ENCODE measurements at regions of chr15 and their contacts with region 1.

Region 1: GRCh38 chr15:77633134-77633912 is 611 bp upstream of the LINGO1 start:
- H3K4me3 ChIP-seq: peak overlapping the region; percentile 31
- H3K27ac ChIP-seq: peak overlapping the region; percentile 7; the same call in 1 of the 2 replicates
- H3K4me1 ChIP-seq: no peaks in the 10 kb centered on the region; the same call in 1 of the 2 replicates
- CTCF ChIP-seq: peak; percentile 100

Region 2: DNA sequence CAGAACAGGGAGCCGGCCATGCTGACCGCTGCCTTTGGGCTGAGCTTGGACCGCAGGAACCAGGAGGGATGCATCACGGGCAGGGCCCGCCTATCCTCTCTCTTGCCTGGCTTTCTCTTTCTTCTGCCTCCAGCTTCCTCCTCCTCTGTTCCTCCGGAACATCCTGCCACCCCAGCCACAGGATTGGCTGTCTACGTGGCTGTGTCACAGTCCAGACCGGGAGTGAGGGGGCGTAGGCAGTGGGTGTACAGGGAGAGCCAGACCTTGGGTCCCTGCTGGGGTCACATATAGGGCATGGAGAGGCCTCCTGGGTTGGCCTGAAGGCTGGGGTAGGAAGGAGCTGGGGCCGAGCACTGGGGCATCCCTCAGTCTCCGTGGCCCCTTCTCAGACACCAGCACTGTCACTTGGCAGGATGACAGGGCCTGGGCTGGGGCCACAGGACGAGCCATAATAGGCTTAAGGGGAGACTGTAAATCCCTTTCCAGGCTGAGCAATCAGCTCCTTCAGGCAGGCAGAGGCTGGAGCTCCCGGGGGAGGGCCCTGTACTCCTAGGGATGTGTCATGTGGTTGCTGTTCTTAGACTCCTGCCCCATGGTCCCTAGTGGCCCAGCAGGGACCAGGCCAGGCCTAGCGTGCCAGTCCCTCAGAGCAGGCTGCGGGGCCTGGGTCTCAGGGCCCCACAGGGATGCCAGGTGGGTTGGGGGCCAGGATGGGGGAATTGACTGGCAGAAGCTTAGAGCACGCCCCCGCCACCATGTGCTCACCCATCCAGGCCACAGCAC is 26.0 kb before region 1 on chr15:
- CTCF ChIA-PET with region 1: interaction called, 18 read pairs
- POLR2A ChIA-PET with region 1: interaction called, 4 read pairs
- H3K4me3 ChIP-seq: no peak overlapping the region
- H3K27ac ChIP-seq: no peak overlapping the region; the same call in 1 of the 2 replicates
- H3K4me1 ChIP-seq: peaks cover 6% of the 10 kb centered on the region; the same call in 1 of the 2 replicates
- CTCF ChIP-seq: 0 out of 2 replicates have a peak, but pooled peaks have one; percentile 8

Region 3: DNA sequence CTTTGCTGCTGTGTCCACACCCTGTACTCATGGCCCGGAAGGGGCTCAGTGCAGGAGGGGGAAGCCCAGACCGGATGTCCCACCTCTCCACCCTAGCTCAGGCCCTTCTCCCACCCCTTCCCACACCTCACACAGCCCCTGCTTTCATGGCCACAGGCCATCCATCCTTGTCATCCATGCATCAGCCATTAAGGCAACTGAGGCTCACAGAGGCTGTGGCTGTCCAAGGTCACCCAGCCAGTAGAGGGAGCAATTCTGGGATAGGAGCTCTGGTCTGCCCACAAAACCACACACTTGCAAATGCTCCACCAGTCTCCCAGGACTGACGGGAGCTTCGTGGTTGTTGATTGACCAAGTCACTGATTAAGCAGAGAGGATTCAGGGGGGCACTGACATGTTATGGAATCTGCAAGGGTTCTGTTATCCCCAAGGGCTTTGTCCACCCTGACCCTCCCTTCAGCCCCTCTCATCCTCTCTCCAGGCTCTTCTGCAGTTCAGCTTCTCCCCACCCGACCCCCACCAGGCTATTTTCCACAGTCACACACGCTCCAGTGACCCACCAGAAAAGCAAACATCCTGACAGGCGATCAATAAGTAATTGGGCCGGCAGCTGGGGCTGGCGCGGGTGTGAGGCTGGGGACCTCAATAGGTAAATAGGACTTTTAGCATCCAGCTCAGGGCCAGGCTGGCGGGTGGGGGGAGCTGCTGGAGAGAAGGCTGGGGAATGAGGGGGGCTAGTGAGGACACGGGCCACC is 15.7 kb before region 1 on chr15:
- CTCF ChIA-PET with region 1: interaction called, 77 read pairs
- POLR2A ChIA-PET with region 1: interaction called, 5 read pairs
- H3K4me3 ChIP-seq: no peak overlapping the region
- H3K27ac ChIP-seq: no peak overlapping the region
- H3K4me1 ChIP-seq: no peaks in the 10 kb centered on the region
- CTCF ChIP-seq: 0 out of 2 replicates have a peak, but pooled peaks have one; percentile 43

Region 4: GRCh38 chr15:77650265-77650664 is 16.9 kb after region 1 on chr15:
- CTCF ChIA-PET with region 1: interaction called, 57 read pairs
- POLR2A ChIA-PET with region 1: no interaction called
- H3K4me3 ChIP-seq: no peak overlapping the region
- H3K27ac ChIP-seq: no peak overlapping the region
- H3K4me1 ChIP-seq: no peaks in the 10 kb centered on the region
- CTCF ChIP-seq: 0 out of 2 replicates have a peak, but pooled peaks have one; percentile 41

Region 5: GRCh38 chr15:77659350-77660321 is 26.3 kb after region 1 on chr15:
- CTCF ChIA-PET with region 1: interaction called, 52 read pairs
- POLR2A ChIA-PET with region 1: interaction called, 4 read pairs
- H3K4me3 ChIP-seq: no peak overlapping the region
- H3K27ac ChIP-seq: no peak overlapping the region
- H3K4me1 ChIP-seq: no peaks in the 10 kb centered on the region
- CTCF ChIP-seq: no peak

Region 6: GRCh38 chr15:77784395-77785292 is 151.3 kb after region 1 on chr15:
- CTCF ChIA-PET with region 1: interaction called, 18 read pairs
- POLR2A ChIA-PET with region 1: no interaction called
- H3K4me3 ChIP-seq: no peak overlapping the region
- H3K27ac ChIP-seq: no peak overlapping the region
- H3K4me1 ChIP-seq: no peaks in the 10 kb centered on the region
- CTCF ChIP-seq: no peak